H1 (cell line): ENCODE measurements at regions of chr4 and their contacts with region 1.

Region 1: GRCh38 chr4:153466081-153466948 is at the start of gene TMEM131L:
- DNase-seq: peak in 1 of 2 experiments; percentile 82
- H3K4me3 ChIP-seq: peak within 1 kb of the TSS; percentile 81 to 91 (median 90)
- H3K27ac ChIP-seq: peak within 1 kb of the TSS; percentile 43; the same call in 1 of the 2 replicates
- H3K4me1 ChIP-seq: peaks cover 0 to 11% (median 5%) of the 10 kb centered on the region in 4 experiments; a peak in 6 of 7 replicates
- H3K27me3 ChIP-seq: 0 out of 7 replicates have a peak, but pooled peaks cover 0 to 3% (median 0%) of the 10 kb centered on the region in 4 experiments
- CTCF ChIP-seq: 0 out of 4 replicates have a peak, but pooled peaks of 1 of the 3 experiments have one; percentile 3
- EP300 ChIP-seq: no peak
- POLR2A ChIP-seq: peak; percentile 75 to 85; a peak in 2 of 3 replicates
- RAD21 ChIP-seq: peak in 1 of 2 experiments; percentile 1; a peak in 1 of 4 replicates
- total RNA-seq, gene TMEM131L: 25.3 and 26.1 TPM in 2 replicates

Region 2: GRCh38 chr4:153344131-153345010 is 121.9 kb before region 1 on chr4 and contains the start of gene MND1:
- CTCF ChIA-PET with region 1: interaction called, 3 read pairs
- POLR2A ChIA-PET with region 1: interaction called, 15 read pairs
- DNase-seq: peak; percentile 72 to 96
- H3K4me3 ChIP-seq: peak within 1 kb of the TSS; percentile 53 to 80 (median 74)
- H3K27ac ChIP-seq: peak within 1 kb of the TSS; percentile 88
- H3K4me1 ChIP-seq: peaks cover 0 to 3% (median 2%) of the 10 kb centered on the region in 4 experiments; a peak in 3 of 7 replicates
- H3K27me3 ChIP-seq: no peaks in the 10 kb centered on the region
- CTCF ChIP-seq: peak; percentile 70 to 82 (median 76)
- EP300 ChIP-seq: peak in 1 of 2 experiments; percentile 48; a peak in 1 of 3 replicates
- POLR2A ChIP-seq: peak; percentile 92 to 93
- RAD21 ChIP-seq: peak; percentile 79 to 83
- total RNA-seq, gene MND1: 26.2 and 27.4 TPM in 2 replicates

Region 3: DNA sequence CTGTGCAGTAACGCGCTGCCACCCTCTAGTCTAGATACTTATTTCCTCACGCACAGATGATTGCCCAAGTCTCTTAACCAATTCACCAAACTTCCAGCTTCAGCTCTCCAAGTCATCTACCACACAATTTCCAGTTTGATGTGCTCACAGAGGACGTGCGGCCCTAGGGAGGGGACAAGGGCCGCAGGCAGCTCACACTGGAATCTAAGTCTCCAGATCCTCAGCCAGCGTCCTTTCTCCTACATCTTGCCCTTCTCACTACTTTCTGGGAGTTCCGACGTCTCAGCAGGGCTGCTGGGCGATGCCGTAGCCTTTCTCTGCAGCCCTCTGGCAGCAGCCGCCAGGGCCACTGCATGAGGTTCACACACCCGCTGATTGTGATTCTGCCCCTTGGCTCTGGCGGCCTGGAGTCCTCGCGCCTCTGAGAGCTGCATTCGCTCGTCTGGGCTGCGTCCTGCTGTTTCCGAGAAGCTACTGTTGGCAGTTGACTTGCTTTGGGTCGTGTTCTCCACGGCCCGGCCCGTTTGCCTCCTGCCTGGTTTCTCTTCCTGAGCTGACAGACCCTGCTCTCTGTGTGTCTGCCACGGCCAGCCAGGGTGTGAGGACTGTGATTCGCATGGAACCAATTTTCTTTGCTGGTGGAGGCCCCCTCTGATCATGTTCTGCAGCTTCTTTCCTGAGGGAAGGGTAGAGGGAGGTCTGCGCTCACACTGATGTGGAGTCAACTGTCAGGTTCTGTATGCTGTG is 14.2 kb before region 1 on chr4:
- CTCF ChIA-PET with region 1: interaction called, 5 read pairs
- POLR2A ChIA-PET with region 1: interaction called, 13 read pairs
- DNase-seq: peak; percentile 46 to 67
- H3K4me3 ChIP-seq: no peak overlapping the region
- H3K27ac ChIP-seq: no peak overlapping the region
- H3K4me1 ChIP-seq: peaks cover 2 to 11% (median 7%) of the 10 kb centered on the region in 4 experiments; a peak in 5 of 7 replicates
- H3K27me3 ChIP-seq: no peaks in the 10 kb centered on the region; a peak in 1 of 7 replicates
- CTCF ChIP-seq: no peak
- EP300 ChIP-seq: no peak
- POLR2A ChIP-seq: no peak
- RAD21 ChIP-seq: peak in 1 of 2 experiments; percentile 22; a peak in 2 of 4 replicates

Region 4: GRCh38 chr4:153488006-153488891 is 21.9 kb after region 1 on chr4:
- CTCF ChIA-PET with region 1: interaction called, 5 read pairs
- POLR2A ChIA-PET with region 1: interaction called, 14 read pairs
- DNase-seq: peak in 1 of 2 experiments; percentile 48
- H3K4me3 ChIP-seq: no peak overlapping the region
- H3K27ac ChIP-seq: peak overlapping the region; percentile 45; the same call in 1 of the 2 replicates
- H3K4me1 ChIP-seq: peaks cover 10 to 34% (median 21%) of the 10 kb centered on the region in 4 experiments
- H3K27me3 ChIP-seq: no peaks in the 10 kb centered on the region
- CTCF ChIP-seq: no peak
- EP300 ChIP-seq: no peak
- POLR2A ChIP-seq: no peak
- RAD21 ChIP-seq: no peak

Region 5: GRCh38 chr4:153541456-153542096 is 75.3 kb after region 1 on chr4:
- CTCF ChIA-PET with region 1: interaction called, 8 read pairs
- POLR2A ChIA-PET with region 1: interaction called, 21 read pairs
- DNase-seq: no peak
- H3K4me3 ChIP-seq: no peak overlapping the region
- H3K27ac ChIP-seq: no peak overlapping the region
- H3K4me1 ChIP-seq: peaks cover 5 to 21% (median 9%) of the 10 kb centered on the region in 4 experiments
- H3K27me3 ChIP-seq: no peaks in the 10 kb centered on the region
- CTCF ChIP-seq: no peak
- EP300 ChIP-seq: no peak
- POLR2A ChIP-seq: no peak
- RAD21 ChIP-seq: no peak